ENCODE measurements at regions of chr2 and their contacts with region 1.

Region 1: GRCh38 chr2:174771631-174772471 is 7.6 kb upstream of the CHRNA1 start:
- DNase-seq: peak; percentile 71
- H3K4me3 ChIP-seq: no peak overlapping the region
- H3K27ac ChIP-seq: no peak overlapping the region
- H3K4me1 ChIP-seq: no peaks in the 10 kb centered on the region
- H3K27me3 ChIP-seq: no peaks in the 10 kb centered on the region
- CTCF ChIP-seq: peak; percentile 84
- POLR2A ChIP-seq: no peak

Region 2: GRCh38 chr2:174722942-174723592 is 48.8 kb before region 1 on chr2:
- CTCF ChIA-PET with region 1: no interaction called
- POLR2A ChIA-PET with region 1: no interaction called
- dilution Hi-C with region 1: no loop called
- intact Hi-C with region 1: no loop called
- DNase-seq: no peak
- H3K4me3 ChIP-seq: no peak overlapping the region
- H3K27ac ChIP-seq: no peak overlapping the region
- H3K4me1 ChIP-seq: no peaks in the 10 kb centered on the region
- H3K27me3 ChIP-seq: peaks cover 6 to 11% of the 10 kb centered on the region in 2 experiments
- CTCF ChIP-seq: no peak
- POLR2A ChIP-seq: no peak

Region 3: GRCh38 chr2:174787487-174788205 is 15.8 kb after region 1 on chr2:
- CTCF ChIA-PET with region 1: interaction called, 48 read pairs
- POLR2A ChIA-PET with region 1: no interaction called
- dilution Hi-C with region 1: no loop called
- intact Hi-C with region 1: no loop called
- DNase-seq: peak; percentile 30
- H3K4me3 ChIP-seq: no peak overlapping the region
- H3K27ac ChIP-seq: no peak overlapping the region
- H3K4me1 ChIP-seq: peaks cover 13% of the 10 kb centered on the region
- H3K27me3 ChIP-seq: no peaks in the 10 kb centered on the region
- CTCF ChIP-seq: no peak
- POLR2A ChIP-seq: no peak

Region 4: GRCh38 chr2:174878537-174879147 is 106.8 kb after region 1 on chr2:
- CTCF ChIA-PET with region 1: interaction called, 12 read pairs
- POLR2A ChIA-PET with region 1: no interaction called
- dilution Hi-C with region 1: no loop called
- intact Hi-C with region 1: no loop called
- DNase-seq: peak; percentile 82
- H3K4me3 ChIP-seq: peak overlapping the region; percentile 15 to 91 (median 68)
- H3K27ac ChIP-seq: no peak overlapping the region
- H3K4me1 ChIP-seq: peaks cover 7% of the 10 kb centered on the region
- H3K27me3 ChIP-seq: no peaks in the 10 kb centered on the region
- CTCF ChIP-seq: no peak
- POLR2A ChIP-seq: no peak

Region 5: DNA sequence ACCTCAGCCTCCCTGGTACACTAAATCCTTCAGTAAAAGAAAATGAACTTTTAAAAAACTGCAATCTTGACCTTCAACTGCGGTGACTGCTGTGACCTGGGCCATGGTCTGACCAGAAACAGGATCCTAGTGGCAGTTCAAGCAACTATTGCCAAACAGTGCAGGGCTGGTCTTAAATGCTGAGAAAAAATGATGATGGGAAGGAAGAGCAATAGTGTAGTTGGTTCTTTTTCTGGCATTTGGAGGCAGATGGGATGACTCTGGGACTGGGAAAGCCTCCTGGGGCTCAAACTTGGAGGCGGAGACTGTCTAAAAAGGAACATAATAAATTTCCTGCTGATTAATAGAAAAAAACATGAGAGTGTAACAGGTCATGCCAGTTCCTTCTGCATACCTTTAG is 187.9 kb after region 1 on chr2:
- CTCF ChIA-PET with region 1: interaction called, 11 read pairs
- POLR2A ChIA-PET with region 1: no interaction called
- dilution Hi-C with region 1: no loop called
- intact Hi-C with region 1: no loop called
- DNase-seq: no peak
- H3K4me3 ChIP-seq: no peak overlapping the region
- H3K27ac ChIP-seq: no peak overlapping the region
- H3K4me1 ChIP-seq: peaks cover 2% of the 10 kb centered on the region
- H3K27me3 ChIP-seq: no peaks in the 10 kb centered on the region
- CTCF ChIP-seq: no peak
- POLR2A ChIP-seq: no peak

Region 6: GRCh38 chr2:174997110-174997509 is 225.3 kb after region 1 on chr2:
- CTCF ChIA-PET with region 1: interaction called, 584 read pairs
- POLR2A ChIA-PET with region 1: no interaction called
- dilution Hi-C with region 1: no loop called
- intact Hi-C with region 1: no loop called
- DNase-seq: no peak
- H3K4me3 ChIP-seq: no peak overlapping the region
- H3K27ac ChIP-seq: no peak overlapping the region
- H3K4me1 ChIP-seq: peaks cover 21% of the 10 kb centered on the region
- H3K27me3 ChIP-seq: no peaks in the 10 kb centered on the region
- CTCF ChIP-seq: no peak
- POLR2A ChIP-seq: no peak

Region 7: DNA sequence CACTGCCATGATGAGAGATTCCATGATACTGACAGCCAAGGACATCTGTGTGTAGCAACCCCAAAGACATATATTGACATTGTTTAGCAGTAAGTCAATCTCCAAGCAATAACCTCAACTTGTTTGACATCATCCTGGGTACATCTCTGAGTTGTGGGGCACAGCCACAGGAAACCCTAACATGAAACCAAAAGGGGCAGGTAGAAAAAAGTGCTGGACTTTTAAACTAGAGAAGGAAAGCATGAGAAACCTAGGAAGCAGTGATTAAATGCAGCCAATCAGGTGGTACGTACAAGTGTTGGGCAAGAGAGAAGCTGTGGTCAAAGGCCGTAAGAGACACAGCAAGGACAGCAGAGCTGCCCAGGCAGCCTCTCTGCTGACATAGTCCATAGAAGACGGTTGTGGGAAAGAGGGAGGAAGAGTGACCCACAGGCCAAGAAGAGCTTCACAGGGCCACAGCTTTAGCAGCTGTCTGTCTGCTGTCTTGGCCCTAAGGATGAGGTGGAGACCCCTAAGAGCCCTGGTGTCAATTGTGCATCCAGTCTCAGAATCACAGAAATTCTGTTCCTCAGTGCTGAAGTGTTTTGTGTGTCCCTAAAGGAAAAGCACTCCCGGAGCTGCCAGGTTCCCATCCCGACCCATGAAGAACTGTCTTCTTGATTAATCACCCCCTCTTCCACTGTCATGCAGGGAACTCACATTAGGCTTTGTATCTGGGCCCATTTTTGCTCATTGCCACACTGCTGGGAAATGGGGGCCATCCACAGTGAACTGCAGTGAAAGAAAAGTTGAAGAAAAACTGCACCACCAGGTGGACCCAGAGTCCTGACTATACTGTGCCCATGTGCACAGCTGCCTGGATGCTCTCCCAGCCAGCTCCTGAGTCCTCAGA is 258.8 kb after region 1 on chr2:
- CTCF ChIA-PET with region 1: interaction called, 15 read pairs
- POLR2A ChIA-PET with region 1: no interaction called
- dilution Hi-C with region 1: no loop called
- intact Hi-C with region 1: no loop called
- DNase-seq: peak; percentile 52
- H3K4me3 ChIP-seq: no peak overlapping the region
- H3K27ac ChIP-seq: no peak overlapping the region
- H3K4me1 ChIP-seq: no peaks in the 10 kb centered on the region
- H3K27me3 ChIP-seq: no peaks in the 10 kb centered on the region
- CTCF ChIP-seq: peak; percentile 24 to 60
- POLR2A ChIP-seq: no peak

Region 8: DNA sequence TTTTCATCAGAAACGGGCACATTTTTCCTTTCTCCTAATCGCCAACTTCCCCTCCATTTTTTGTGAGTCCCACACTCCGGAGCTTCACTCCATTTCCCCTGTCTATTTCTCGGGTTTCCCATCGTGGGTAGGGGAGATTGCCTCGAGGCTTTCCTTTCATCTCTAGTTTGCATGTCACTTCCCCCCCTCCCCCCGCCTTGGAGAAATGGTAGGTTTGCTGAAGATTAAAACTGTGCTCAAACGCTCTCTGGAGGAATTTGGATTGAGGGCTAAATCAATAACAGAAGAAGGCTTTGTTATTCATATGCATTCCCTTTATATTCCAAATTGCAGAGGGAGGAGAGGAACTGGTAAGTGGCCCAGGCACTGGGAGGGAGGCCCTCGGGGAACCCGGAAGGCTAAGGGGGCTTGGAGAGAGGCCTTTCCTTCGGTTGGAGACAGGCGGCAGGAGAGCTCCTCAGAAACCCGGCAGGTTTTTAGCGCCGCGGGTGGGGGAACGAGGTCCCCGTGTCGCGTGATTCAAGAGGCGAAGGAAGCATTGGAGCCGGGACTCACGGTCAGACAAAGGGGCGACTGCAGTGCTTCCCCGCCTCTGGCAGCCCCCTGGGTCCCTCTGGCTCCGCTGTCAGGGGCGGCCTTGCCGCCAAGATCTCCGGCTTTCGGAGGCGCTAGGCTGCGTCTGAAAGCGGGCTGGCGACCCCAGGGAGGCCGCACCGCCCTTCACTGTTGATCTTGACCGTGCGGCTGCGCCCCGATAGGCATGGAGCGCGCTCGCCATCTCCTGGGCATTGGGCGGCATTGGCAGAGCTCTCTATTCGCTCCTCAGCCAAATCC is 1325.4 kb after region 1 on chr2:
- CTCF ChIA-PET with region 1: interaction called, 10 read pairs
- POLR2A ChIA-PET with region 1: no interaction called
- dilution Hi-C with region 1: no loop called
- intact Hi-C with region 1: no loop called
- DNase-seq: peak; percentile 72
- H3K4me3 ChIP-seq: peak overlapping the region in 1 of 3 experiments; percentile 17
- H3K27ac ChIP-seq: no peak overlapping the region
- H3K4me1 ChIP-seq: peaks cover 5% of the 10 kb centered on the region
- H3K27me3 ChIP-seq: peaks cover 87 to 97% of the 10 kb centered on the region in 2 experiments
- CTCF ChIP-seq: peak; percentile 83 to 93
- POLR2A ChIP-seq: no peak

Measured in endothelial cell of umbilical vein (primary cell).